Gastrocnemius medialis (tissue), 4 donors: ENCODE measurements at regions of chr19 and their contacts with region 1.

Region 1: GRCh38 chr19:56140583-56141416 is at the start of gene ZNF444:
- DNase-seq: peak; percentile 98 to 99
- ATAC-seq: peak; percentile 96
- H3K4me3 ChIP-seq: peak within 1 kb of the TSS; percentile 57 to 76 (median 60)
- H3K27ac ChIP-seq: peak within 1 kb of the TSS; percentile 84 to 89 (median 86)
- H3K4me1 ChIP-seq: peaks cover 11 to 21% of the 10 kb centered on the region in 2 donors
- H3K27me3 ChIP-seq: no peaks in the 10 kb centered on the region
- CTCF ChIP-seq: no peak
- POLR2A ChIP-seq: peak; percentile 52 to 54
- total RNA-seq, gene ZNF444: 16.4 to 38.9 (median 24.9) TPM

Region 2: DNA sequence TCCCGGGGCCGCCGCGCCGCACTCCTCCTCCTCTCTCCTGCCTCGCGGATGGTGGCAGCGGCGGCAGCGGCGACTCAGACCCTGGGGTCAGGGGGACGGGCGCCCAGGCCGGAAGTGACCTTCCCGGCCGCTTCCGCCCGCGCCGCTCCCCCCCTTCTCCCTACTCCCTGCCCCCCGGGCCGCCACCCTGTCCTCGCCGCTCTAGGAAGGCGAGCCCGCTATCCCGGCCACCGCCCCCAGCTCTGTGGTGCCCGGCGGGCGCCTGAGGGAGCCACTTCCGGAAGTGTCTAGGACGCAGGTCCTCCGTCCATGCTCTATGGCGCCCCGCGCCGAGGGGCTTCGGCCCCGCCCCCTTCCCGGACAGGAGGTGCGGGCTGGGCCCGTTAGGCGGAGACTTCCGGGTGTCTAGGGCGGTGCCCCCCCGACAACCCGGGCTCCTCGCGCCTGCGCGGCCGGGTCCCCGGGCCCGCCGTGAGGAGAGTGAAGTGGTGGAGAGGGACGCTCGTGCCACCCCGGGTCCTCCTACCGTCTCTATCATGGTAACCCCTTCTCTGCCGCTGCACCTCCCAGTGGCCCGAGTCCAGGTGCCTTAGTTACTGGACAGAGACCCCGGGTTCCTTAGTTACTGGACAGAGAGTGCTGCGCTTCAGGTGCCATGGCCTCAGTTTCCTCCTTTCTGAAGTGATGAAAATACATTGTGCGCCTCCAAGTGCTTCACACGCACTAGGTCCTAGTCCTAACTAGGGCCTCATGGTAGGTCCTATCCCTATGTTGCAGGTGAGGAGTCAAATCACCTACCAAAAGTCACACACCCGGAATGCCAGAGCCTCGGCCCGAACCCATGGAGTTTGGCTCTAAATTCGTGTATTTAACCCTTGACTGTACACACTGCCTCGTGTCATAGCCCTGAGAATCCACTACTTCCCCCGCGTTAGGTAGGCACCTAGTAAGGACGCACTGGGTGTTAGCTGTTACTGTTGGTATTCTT is 19.3 kb before region 1 on chr19 and contains the start of gene ZNF787:
- in situ Hi-C with region 1: no loop called
- intact Hi-C with region 1: loop called (anchors 1 kb)
- DNase-seq: peak; percentile 95 to 99
- ATAC-seq: peak; percentile 77 to 85
- H3K4me3 ChIP-seq: peak within 1 kb of the TSS; percentile 79 to 93 (median 88)
- H3K27ac ChIP-seq: peak within 1 kb of the TSS; percentile 92 to 99 (median 98)
- H3K4me1 ChIP-seq: peaks cover 35 to 54% of the 10 kb centered on the region in 2 donors
- H3K27me3 ChIP-seq: no peaks in the 10 kb centered on the region
- CTCF ChIP-seq: no peak
- POLR2A ChIP-seq: peak; percentile 54 to 60
- total RNA-seq, gene ZNF787: 16.7 to 43.0 (median 26.5) TPM

Region 3: GRCh38 chr19:56594783-56595547 is 454.2 kb after region 1 on chr19 and contains the start of gene ZNF71:
- in situ Hi-C with region 1: no loop called
- intact Hi-C with region 1: loop called (anchors 10 kb)
- DNase-seq: peak; percentile 71 to 75
- ATAC-seq: peak; percentile 77 to 90
- H3K4me3 ChIP-seq: peak within 1 kb of the TSS; percentile 73 to 98 (median 84)
- H3K27ac ChIP-seq: peak within 1 kb of the TSS; percentile 76 to 82 (median 78)
- H3K4me1 ChIP-seq: peaks cover 12 to 18% of the 10 kb centered on the region in 2 donors
- H3K27me3 ChIP-seq: no peaks in the 10 kb centered on the region
- CTCF ChIP-seq: no peak
- POLR2A ChIP-seq: peak in 1 of 2 donors; percentile 28
- total RNA-seq, gene ZNF71: 6.7 to 7.5 (median 7.4) TPM